Endothelial cell of umbilical vein (primary cell): ENCODE measurements at regions of chr14 and their contacts with region 1.

Region 1: GRCh38 chr14:35814371-35815005 is 5.4 kb upstream of the RALGAPA1 start:
- DNase-seq: peak; percentile 66
- H3K4me3 ChIP-seq: no peak overlapping the region
- H3K27ac ChIP-seq: no peak overlapping the region
- H3K4me1 ChIP-seq: no peaks in the 10 kb centered on the region
- H3K27me3 ChIP-seq: peaks cover 2 to 10% of the 10 kb centered on the region in 2 experiments
- CTCF ChIP-seq: peak; percentile 64 to 75
- POLR2A ChIP-seq: no peak

Region 2: GRCh38 chr14:35140718-35141581 is 673.5 kb before region 1 on chr14:
- CTCF ChIA-PET with region 1: interaction called, 11 read pairs
- POLR2A ChIA-PET with region 1: no interaction called
- dilution Hi-C with region 1: no loop called
- intact Hi-C with region 1: loop called (anchors 2 kb)
- DNase-seq: peak; percentile 51
- H3K4me3 ChIP-seq: no peak overlapping the region
- H3K27ac ChIP-seq: no peak overlapping the region
- H3K4me1 ChIP-seq: no peaks in the 10 kb centered on the region
- H3K27me3 ChIP-seq: no peaks in the 10 kb centered on the region
- CTCF ChIP-seq: no peak
- POLR2A ChIP-seq: no peak

Region 3: DNA sequence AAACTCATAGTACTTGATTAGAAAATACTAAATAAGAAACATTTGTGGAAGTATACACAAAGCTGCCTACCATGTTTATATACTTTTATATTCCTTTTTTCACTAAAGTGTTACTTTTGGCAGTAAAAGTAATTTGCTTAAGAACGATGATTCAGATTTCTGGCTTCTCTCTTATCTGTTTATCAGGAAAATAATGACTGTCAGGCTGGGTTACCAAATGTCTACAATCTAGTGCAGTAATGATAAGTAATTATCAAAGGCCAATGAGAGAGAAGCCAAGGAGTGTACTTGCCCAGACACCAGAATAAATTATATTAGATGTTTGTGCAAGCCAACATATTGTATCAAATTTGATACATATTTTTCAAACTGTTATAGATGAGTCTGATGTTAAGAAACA is 118.8 kb before region 1 on chr14:
- CTCF ChIA-PET with region 1: interaction called, 5 read pairs
- POLR2A ChIA-PET with region 1: no interaction called
- dilution Hi-C with region 1: no loop called
- intact Hi-C with region 1: loop called (anchors 10 kb)
- DNase-seq: peak; percentile 40
- H3K4me3 ChIP-seq: no peak overlapping the region
- H3K27ac ChIP-seq: no peak overlapping the region
- H3K4me1 ChIP-seq: peaks cover 24% of the 10 kb centered on the region
- H3K27me3 ChIP-seq: no peaks in the 10 kb centered on the region
- CTCF ChIP-seq: no peak
- POLR2A ChIP-seq: no peak

Region 4: DNA sequence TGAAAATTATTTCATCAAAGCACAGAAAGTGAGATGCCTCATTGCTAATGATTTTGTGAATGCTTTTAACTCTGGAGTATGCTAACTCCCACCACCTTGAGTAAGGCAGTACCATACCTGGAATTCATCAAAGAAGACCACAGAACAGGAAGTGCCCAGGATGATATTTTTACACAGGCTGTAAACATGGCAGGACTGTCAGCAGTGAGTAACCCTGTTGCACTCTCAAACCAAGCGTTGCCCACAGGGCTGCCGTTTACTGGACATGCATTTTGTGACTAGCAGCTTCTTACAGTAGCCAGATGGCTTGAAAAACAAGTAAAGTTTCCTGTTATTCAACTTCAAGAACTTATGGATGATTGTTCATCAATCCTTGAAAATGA is 47.8 kb before region 1 on chr14:
- CTCF ChIA-PET with region 1: no interaction called
- POLR2A ChIA-PET with region 1: no interaction called
- dilution Hi-C with region 1: no loop called
- intact Hi-C with region 1: no loop called
- DNase-seq: no peak
- H3K4me3 ChIP-seq: no peak overlapping the region
- H3K27ac ChIP-seq: no peak overlapping the region
- H3K4me1 ChIP-seq: no peaks in the 10 kb centered on the region
- H3K27me3 ChIP-seq: no peaks in the 10 kb centered on the region
- CTCF ChIP-seq: no peak
- POLR2A ChIP-seq: no peak

Region 5: GRCh38 chr14:35932659-35933322 is 118.3 kb after region 1 on chr14:
- CTCF ChIA-PET with region 1: no interaction called
- POLR2A ChIA-PET with region 1: no interaction called
- dilution Hi-C with region 1: no loop called
- intact Hi-C with region 1: no loop called
- DNase-seq: no peak
- H3K4me3 ChIP-seq: no peak overlapping the region
- H3K27ac ChIP-seq: no peak overlapping the region
- H3K4me1 ChIP-seq: no peaks in the 10 kb centered on the region
- H3K27me3 ChIP-seq: peaks cover 2 to 3% of the 10 kb centered on the region in 2 experiments
- CTCF ChIP-seq: no peak
- POLR2A ChIP-seq: no peak